Astrocyte of the cerebellum (primary cell): ENCODE measurements at regions of chr20 and their contacts with region 1.

Region 1: GRCh38 chr20:8476021-8476420 is 344.0 kb downstream of the PLCB1 start:
- DNase-seq: no peak
- H3K4me3 ChIP-seq: no peak overlapping the region
- CTCF ChIP-seq: no peak

Region 2: GRCh38 chr20:8534368-8535160 is 58.5 kb after region 1 on chr20:
- in situ Hi-C with region 1: loop called (anchors 5 kb)
- DNase-seq: no peak
- H3K4me3 ChIP-seq: no peak overlapping the region
- CTCF ChIP-seq: no peak